HepG2 (cell line): ENCODE measurements at regions of chr3 and their contacts with region 1.

Region 1: GRCh38 chr3:23999012-23999641 is 54.0 kb downstream of the NR1D2 start:
- DNase-seq: peak; percentile 45
- ATAC-seq: peak; percentile 53; the same call in 2 of the 3 replicates
- H3K4me3 ChIP-seq: no peak overlapping the region
- H3K27ac ChIP-seq: no peak overlapping the region
- H3K4me1 ChIP-seq: no peaks in the 10 kb centered on the region
- H3K27me3 ChIP-seq: peaks cover 0 to 18% of the 10 kb centered on the region in 2 experiments; a peak in 2 of 5 replicates
- CTCF ChIP-seq: peak; percentile 89
- EP300 ChIP-seq: no peak; a peak in 1 of 4 replicates
- POLR2A ChIP-seq: no peak
- RAD21 ChIP-seq: peak; percentile 84

Region 2: DNA sequence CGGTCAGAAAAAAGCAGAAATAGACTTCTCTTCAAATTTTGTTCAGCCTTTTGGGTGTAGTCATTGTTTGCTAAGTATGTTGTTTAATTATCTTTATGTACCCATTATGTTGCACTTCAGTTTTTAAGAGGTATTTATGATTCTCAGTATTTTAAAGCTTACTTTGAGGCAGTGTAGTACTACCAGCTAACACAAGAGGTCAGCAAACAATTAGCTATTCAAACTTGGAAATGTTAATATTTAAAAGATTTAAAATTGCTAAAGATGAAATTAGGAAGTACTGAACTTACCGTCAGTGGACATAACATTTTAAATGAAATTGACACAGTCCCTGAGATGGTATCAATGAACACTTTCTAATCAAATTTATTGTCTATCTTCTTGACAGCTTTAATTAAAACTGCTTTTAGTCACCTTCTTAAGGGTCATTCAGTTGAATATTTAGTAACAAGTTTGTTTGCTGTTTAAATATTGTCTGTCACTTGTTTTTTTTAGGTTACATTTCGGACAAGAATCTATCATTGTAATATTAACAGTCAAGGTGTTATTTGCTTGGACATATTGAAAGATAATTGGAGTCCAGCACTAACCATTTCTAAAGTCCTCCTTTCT is 110.4 kb before region 1 on chr3:
- CTCF ChIA-PET with region 1: no interaction called
- POLR2A ChIA-PET with region 1: no interaction called
- in situ Hi-C with region 1: no loop called
- intact Hi-C with region 1: loop called (anchors 10 kb)
- DNase-seq: peak; percentile 22
- ATAC-seq: no peak; the same call in 2 of the 3 replicates
- H3K4me3 ChIP-seq: no peak overlapping the region
- H3K27ac ChIP-seq: no peak overlapping the region
- H3K4me1 ChIP-seq: no peaks in the 10 kb centered on the region; the same call in 1 of the 2 replicates
- H3K27me3 ChIP-seq: no peaks in the 10 kb centered on the region
- CTCF ChIP-seq: peak; percentile 58
- EP300 ChIP-seq: no peak
- POLR2A ChIP-seq: no peak
- RAD21 ChIP-seq: no peak

Region 3: GRCh38 chr3:23959135-23959900 is 39.8 kb before region 1 on chr3:
- CTCF ChIA-PET with region 1: no interaction called
- POLR2A ChIA-PET with region 1: no interaction called
- in situ Hi-C with region 1: no loop called
- intact Hi-C with region 1: no loop called
- DNase-seq: peak; percentile 18
- ATAC-seq: peak; percentile 51
- H3K4me3 ChIP-seq: no peak overlapping the region
- H3K27ac ChIP-seq: no peak overlapping the region
- H3K4me1 ChIP-seq: no peaks in the 10 kb centered on the region
- H3K27me3 ChIP-seq: no peaks in the 10 kb centered on the region
- CTCF ChIP-seq: no peak
- EP300 ChIP-seq: no peak
- POLR2A ChIP-seq: no peak
- RAD21 ChIP-seq: no peak

Region 4: GRCh38 chr3:24069045-24069444 is 69.9 kb after region 1 on chr3:
- CTCF ChIA-PET with region 1: no interaction called
- POLR2A ChIA-PET with region 1: no interaction called
- in situ Hi-C with region 1: no loop called
- intact Hi-C with region 1: no loop called
- DNase-seq: peak; percentile 5
- ATAC-seq: no peak; the same call in 2 of the 3 replicates
- H3K4me3 ChIP-seq: no peak overlapping the region
- H3K27ac ChIP-seq: no peak overlapping the region
- H3K4me1 ChIP-seq: no peaks in the 10 kb centered on the region
- H3K27me3 ChIP-seq: no peaks in the 10 kb centered on the region; a peak in 2 of 5 replicates
- CTCF ChIP-seq: peak; percentile 58
- EP300 ChIP-seq: no peak
- POLR2A ChIP-seq: no peak
- RAD21 ChIP-seq: 0 out of 2 replicates have a peak, but pooled peaks have one; percentile 32

Region 5: GRCh38 chr3:24582431-24583403 is 583.6 kb after region 1 on chr3:
- CTCF ChIA-PET with region 1: no interaction called
- POLR2A ChIA-PET with region 1: no interaction called
- in situ Hi-C with region 1: no loop called
- intact Hi-C with region 1: loop called (anchors 10 kb)
- DNase-seq: peak; percentile 30
- ATAC-seq: peak; percentile 63
- H3K4me3 ChIP-seq: no peak overlapping the region
- H3K27ac ChIP-seq: no peak overlapping the region
- H3K4me1 ChIP-seq: peaks cover 4% of the 10 kb centered on the region; the same call in 1 of the 2 replicates
- H3K27me3 ChIP-seq: peaks cover 0 to 4% of the 10 kb centered on the region in 2 experiments; a peak in 2 of 5 replicates
- CTCF ChIP-seq: peak; percentile 60
- EP300 ChIP-seq: no peak
- POLR2A ChIP-seq: no peak
- RAD21 ChIP-seq: peak; percentile 22; the same call in 1 of the 2 replicates

Region 6: DNA sequence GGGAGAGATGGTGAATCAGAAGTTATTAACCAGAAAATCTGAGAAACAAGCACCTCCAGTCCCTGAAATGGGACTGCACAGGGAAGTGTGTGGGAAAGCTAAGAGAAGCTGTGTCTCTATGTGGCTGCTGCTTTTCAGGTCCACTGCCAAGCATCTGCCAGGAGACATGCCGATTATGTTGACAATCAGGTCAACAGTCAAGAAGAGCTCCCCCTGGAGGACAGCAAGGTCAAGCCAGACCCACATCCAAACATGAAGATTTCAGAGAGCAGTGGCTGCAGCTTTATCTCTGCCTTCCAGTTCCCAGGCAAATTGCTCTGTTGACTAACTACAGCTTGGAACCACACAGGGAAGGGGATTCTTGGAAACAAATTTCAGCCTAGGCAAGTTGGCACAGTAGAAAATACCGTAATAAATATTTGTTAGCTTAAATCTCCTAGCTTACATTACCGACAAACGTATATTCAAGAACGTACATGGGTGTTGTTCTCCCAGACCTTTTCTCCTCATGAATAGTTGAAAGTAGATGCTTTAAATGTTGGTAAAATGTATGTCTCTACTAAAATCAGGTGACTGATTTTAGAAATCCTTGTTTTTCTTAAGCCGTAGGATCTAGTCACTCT is 1034.4 kb after region 1 on chr3:
- CTCF ChIA-PET with region 1: no interaction called
- POLR2A ChIA-PET with region 1: no interaction called
- in situ Hi-C with region 1: no loop called
- intact Hi-C with region 1: loop called (anchors 5 kb)
- DNase-seq: peak; percentile 45
- ATAC-seq: peak; percentile 88
- H3K4me3 ChIP-seq: no peak overlapping the region
- H3K27ac ChIP-seq: no peak overlapping the region
- H3K4me1 ChIP-seq: no peaks in the 10 kb centered on the region
- H3K27me3 ChIP-seq: no peaks in the 10 kb centered on the region
- CTCF ChIP-seq: peak; percentile 74
- EP300 ChIP-seq: no peak
- POLR2A ChIP-seq: no peak
- RAD21 ChIP-seq: no peak